Right ventricle myocardium inferior (tissue), 1 donor: ENCODE measurements at regions of chr2 and their contacts with region 1.

Region 1: GRCh38 chr2:24658531-24659202 is 134.5 kb downstream of the PTRHD1 start:
- DNase-seq: no peak
- ATAC-seq: peak; percentile 82

Region 2: DNA sequence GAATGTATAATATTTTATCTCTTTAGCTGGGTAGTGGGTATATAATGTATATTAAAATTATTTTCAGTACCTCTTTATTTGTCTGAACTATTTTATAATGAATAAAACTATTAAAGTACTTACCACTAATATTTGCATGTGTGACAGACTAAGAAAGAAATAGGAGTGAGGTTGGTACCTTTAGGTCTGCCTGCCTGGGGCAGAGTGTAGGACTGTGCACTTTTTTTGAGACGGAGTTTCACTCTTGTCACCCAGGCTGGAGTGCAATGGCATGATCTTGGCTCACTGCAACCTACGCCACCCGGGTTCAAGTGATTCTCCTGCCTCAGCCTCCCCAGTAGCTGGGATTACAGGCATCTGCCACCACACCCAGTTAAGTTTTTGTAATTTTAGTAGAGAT is 148.8 kb before region 1 on chr2:
- intact Hi-C with region 1: loop called (anchors 5 kb)
- DNase-seq: no peak
- ATAC-seq: no peak